ENCODE measurements at regions of chr12 and their contacts with region 1.

Region 1: GRCh38 chr12:117836999-117837736 is 131.6 kb downstream of the KSR2 start:
- DNase-seq: peak; percentile 88

Region 2: DNA sequence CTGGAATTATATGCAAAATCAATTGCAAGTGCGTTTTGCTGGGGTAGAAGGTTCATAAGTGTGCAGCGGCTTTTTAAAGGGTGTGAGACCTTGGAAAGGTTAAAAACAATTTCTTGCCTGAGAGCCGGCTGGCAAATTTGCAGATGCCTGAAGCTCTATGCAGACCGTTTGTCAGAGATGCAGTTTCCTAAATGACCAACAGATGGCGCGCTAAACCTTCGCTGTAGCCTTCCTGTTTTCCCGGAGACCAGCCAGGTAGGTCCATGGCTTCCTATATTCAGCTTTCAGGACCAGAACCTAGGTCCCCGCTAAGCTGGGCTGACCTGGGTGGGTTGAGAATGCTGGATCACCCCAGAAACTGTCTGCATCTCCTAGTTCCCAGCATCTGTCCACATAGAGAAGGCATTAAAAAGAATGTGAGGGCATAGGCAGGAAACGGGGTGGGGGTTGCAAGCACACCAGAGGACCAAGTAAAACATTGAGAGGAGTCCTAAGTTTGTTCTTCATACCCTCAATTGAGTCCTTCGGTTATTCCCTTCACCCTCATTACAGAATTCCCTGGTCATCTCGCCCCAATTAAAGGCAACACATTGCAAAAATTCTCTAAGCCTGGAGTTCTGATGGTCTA is 470.0 kb before region 1 on chr12:
- in situ Hi-C with region 1: loop called (anchors 25 kb)
- DNase-seq: peak; percentile 82

Region 3: GRCh38 chr12:117587631-117588287 is 249.4 kb before region 1 on chr12:
- in situ Hi-C with region 1: loop called (anchors 25 kb)
- DNase-seq: peak; percentile 74

Region 4: GRCh38 chr12:117685110-117685926 is 151.8 kb before region 1 on chr12:
- in situ Hi-C with region 1: loop called (anchors 25 kb)
- DNase-seq: peak; percentile 100

Measured in ACHN (cell line).